ENCODE measurements at regions of chr5 and their contacts with region 1.

Region 1: DNA sequence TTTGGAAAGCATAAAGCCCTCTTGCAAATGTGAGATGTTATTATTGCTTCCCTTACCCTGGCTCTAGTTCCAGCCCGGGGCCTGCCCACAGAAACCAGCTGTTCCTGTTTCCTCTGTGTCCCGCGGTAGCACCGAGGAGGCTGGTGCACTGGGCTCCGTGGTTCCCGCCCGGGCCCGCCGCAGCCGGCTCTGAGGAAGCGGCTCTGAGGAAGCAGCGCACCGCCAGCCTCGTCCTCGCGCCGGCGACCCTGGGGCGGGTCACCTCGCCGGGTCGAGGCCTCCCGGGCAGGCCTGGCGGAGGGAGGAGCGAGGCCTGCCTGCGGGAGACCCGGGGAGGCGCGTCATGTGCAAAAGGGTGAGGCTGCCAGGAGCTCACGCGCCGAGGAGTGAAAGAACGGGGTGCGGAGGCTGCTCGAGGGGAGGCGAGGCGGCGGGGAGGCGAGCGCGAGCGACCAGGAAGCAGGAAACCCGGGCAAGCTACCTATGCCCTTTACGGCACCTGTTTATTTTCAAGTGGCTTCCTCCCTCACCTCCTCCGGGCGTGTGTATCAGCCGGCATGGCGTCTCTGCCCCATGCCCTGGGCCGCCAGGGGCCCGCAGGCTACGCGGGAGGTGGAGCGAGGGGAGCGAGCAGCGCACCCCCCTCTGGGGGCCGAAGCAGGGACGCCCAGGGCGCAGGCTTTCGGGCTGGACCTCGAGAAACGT is 61.3 kb upstream of the MEGF10 start:
- DNase-seq: peak; percentile 62
- ATAC-seq: peak; percentile 86
- H3K4me3 Mint-ChIP-seq: peak overlapping the region; percentile 85
- H3K27ac Mint-ChIP-seq: no peak overlapping the region
- H3K4me1 Mint-ChIP-seq: peaks cover 18% of the 10 kb centered on the region
- H3K27me3 Mint-ChIP-seq: no peaks in the 10 kb centered on the region
- CTCF ChIP-seq: no peak

Region 2: DNA sequence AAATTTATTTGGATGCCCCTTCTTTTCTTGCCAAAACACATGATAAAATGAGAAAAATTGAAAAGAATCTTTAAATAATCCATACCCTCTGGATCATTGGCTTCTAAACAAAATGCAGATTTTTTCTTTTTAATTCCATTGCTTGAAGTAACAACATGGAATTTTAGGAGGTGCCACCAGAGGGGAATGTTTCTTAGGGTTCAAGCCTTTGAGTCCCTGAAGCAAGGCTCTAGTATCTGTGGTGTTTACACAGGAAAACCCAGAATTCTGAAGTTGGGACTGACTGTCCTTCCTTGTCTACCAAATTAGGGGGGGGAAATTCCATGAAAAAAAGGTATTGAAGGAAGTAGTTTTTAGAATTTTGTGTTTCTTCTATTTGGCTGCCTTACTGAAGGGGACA is 383.0 kb before region 1 on chr5:
- CTCF ChIA-PET with region 1: no interaction called
- POLR2A ChIA-PET with region 1: no interaction called
- intact Hi-C with region 1: loop called (anchors 5 kb)
- DNase-seq: no peak
- ATAC-seq: no peak
- H3K4me3 Mint-ChIP-seq: no peak overlapping the region
- H3K27ac Mint-ChIP-seq: peak overlapping the region; percentile 95
- H3K4me1 Mint-ChIP-seq: peaks cover 41% of the 10 kb centered on the region
- H3K27me3 Mint-ChIP-seq: no peaks in the 10 kb centered on the region
- CTCF ChIP-seq: no peak

Region 3: GRCh38 chr5:126972062-126972895 is 257.1 kb before region 1 on chr5:
- CTCF ChIA-PET with region 1: no interaction called
- POLR2A ChIA-PET with region 1: no interaction called
- intact Hi-C with region 1: loop called (anchors 10 kb)
- DNase-seq: peak; percentile 29
- ATAC-seq: peak; percentile 77
- H3K4me3 Mint-ChIP-seq: peak overlapping the region; percentile 84
- H3K27ac Mint-ChIP-seq: peak overlapping the region; percentile 100
- H3K4me1 Mint-ChIP-seq: peaks cover 77% of the 10 kb centered on the region
- H3K27me3 Mint-ChIP-seq: no peaks in the 10 kb centered on the region
- CTCF ChIP-seq: no peak

Region 4: GRCh38 chr5:127019928-127020327 is 209.4 kb before region 1 on chr5:
- CTCF ChIA-PET with region 1: no interaction called
- POLR2A ChIA-PET with region 1: no interaction called
- intact Hi-C with region 1: no loop called
- DNase-seq: no peak
- ATAC-seq: no peak
- H3K4me3 Mint-ChIP-seq: no peak overlapping the region
- H3K27ac Mint-ChIP-seq: no peak overlapping the region
- H3K4me1 Mint-ChIP-seq: peaks cover 51% of the 10 kb centered on the region
- H3K27me3 Mint-ChIP-seq: no peaks in the 10 kb centered on the region
- CTCF ChIP-seq: no peak